GM12878 (cell line): ENCODE measurements at regions of chr1 and their contacts with region 1.

Region 1: GRCh38 chr1:86419277-86419903 is 4.6 kb upstream of the CLCA2 start:
- DNase-seq: no peak
- ATAC-seq: peak; percentile 90
- H3K4me3 ChIP-seq: no peak overlapping the region
- H3K27ac ChIP-seq: no peak overlapping the region
- H3K4me1 ChIP-seq: no peaks in the 10 kb centered on the region
- H3K27me3 ChIP-seq: no peaks in the 10 kb centered on the region; a peak in 1 of 4 replicates
- CTCF ChIP-seq: peak; percentile 51 to 71 (median 68)
- EP300 ChIP-seq: no peak
- POLR2A ChIP-seq: no peak
- RAD21 ChIP-seq: peak; percentile 80

Region 2: GRCh38 chr1:86441581-86441980 is 22.2 kb after region 1 on chr1:
- CTCF ChIA-PET with region 1: no interaction called
- POLR2A ChIA-PET with region 1: no interaction called
- RAD21 ChIA-PET with region 1: no interaction called
- SMC1A ChIA-PET with region 1: interaction called, 11 read pairs
- in situ Hi-C with region 1: no loop called
- intact Hi-C with region 1: no loop called
- DNase-seq: no peak
- ATAC-seq: no peak
- H3K4me3 ChIP-seq: no peak overlapping the region
- H3K27ac ChIP-seq: no peak overlapping the region
- H3K4me1 ChIP-seq: no peaks in the 10 kb centered on the region
- H3K27me3 ChIP-seq: 0 out of 4 replicates have a peak, but pooled peaks cover 0 to 3% of the 10 kb centered on the region in 2 experiments
- CTCF ChIP-seq: no peak
- EP300 ChIP-seq: no peak
- POLR2A ChIP-seq: no peak
- RAD21 ChIP-seq: no peak